Activated CD4-positive, alpha-beta memory T cell treated with anti-CD3 and anti-CD28 coated beads for 36 hours (primary cell): ENCODE measurements at regions of chr4 and their contacts with region 1.

Region 1: GRCh38 chr4:26330186-26330787 is 9.5 kb downstream of the RBPJ start:
- DNase-seq: no peak
- H3K4me3 Mint-ChIP-seq: no peak overlapping the region
- H3K27ac Mint-ChIP-seq: no peak overlapping the region
- H3K4me1 Mint-ChIP-seq: peaks cover 53% of the 10 kb centered on the region
- H3K27me3 Mint-ChIP-seq: no peaks in the 10 kb centered on the region

Region 2: GRCh38 chr4:25749150-25749794 is 581.0 kb before region 1 on chr4:
- CTCF ChIA-PET with region 1: no interaction called
- POLR2A ChIA-PET with region 1: no interaction called
- intact Hi-C with region 1: no loop called
- DNase-seq: no peak
- H3K4me3 Mint-ChIP-seq: no peak overlapping the region
- H3K27ac Mint-ChIP-seq: no peak overlapping the region
- H3K4me1 Mint-ChIP-seq: no peaks in the 10 kb centered on the region
- H3K27me3 Mint-ChIP-seq: no peaks in the 10 kb centered on the region

Region 3: GRCh38 chr4:26061248-26061986 is 268.9 kb before region 1 on chr4:
- CTCF ChIA-PET with region 1: interaction called, 11 read pairs
- POLR2A ChIA-PET with region 1: no interaction called
- intact Hi-C with region 1: no loop called
- DNase-seq: peak; percentile 43
- H3K4me3 Mint-ChIP-seq: no peak overlapping the region
- H3K27ac Mint-ChIP-seq: no peak overlapping the region
- H3K4me1 Mint-ChIP-seq: peaks cover 26% of the 10 kb centered on the region
- H3K27me3 Mint-ChIP-seq: no peaks in the 10 kb centered on the region

Region 4: GRCh38 chr4:26342328-26343037 is 12.2 kb after region 1 on chr4:
- CTCF ChIA-PET with region 1: interaction called, 34 read pairs
- POLR2A ChIA-PET with region 1: no interaction called
- intact Hi-C with region 1: no loop called
- DNase-seq: no peak
- H3K4me3 Mint-ChIP-seq: no peak overlapping the region
- H3K27ac Mint-ChIP-seq: no peak overlapping the region
- H3K4me1 Mint-ChIP-seq: peaks cover 59% of the 10 kb centered on the region
- H3K27me3 Mint-ChIP-seq: no peaks in the 10 kb centered on the region

Region 5: DNA sequence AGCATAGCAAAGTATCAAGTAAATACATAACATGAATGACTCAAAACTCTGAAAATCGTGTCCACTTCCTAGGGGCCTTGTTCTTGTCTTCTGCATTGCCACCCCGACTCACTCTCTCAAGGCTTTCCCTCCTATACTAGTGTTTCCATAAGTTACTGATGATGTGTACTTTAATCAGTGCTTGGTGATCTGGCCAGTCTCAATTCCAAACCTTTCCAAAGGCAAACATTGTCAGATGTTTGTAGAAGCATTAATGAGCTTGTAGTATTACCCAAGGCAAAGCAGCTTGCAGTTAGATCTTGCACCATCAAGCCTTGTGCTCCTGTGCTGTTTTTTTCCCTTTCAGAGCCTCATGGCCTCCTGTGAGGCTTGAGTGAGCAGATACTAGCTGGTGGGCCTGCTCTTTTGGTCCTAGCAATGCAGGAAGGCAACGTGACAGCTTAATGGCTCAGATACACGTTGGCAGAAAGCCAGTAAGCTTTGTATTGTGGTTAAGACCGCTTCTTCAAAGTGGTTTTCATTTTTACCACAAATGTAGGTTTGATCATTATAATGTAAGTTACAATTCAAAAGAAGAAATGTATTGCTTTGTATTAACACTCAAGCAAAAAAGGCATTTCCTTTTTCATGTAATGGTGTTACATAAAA is 42.4 kb after region 1 on chr4:
- CTCF ChIA-PET with region 1: interaction called, 10 read pairs
- POLR2A ChIA-PET with region 1: interaction called, 3 read pairs
- intact Hi-C with region 1: loop called (anchors 5 kb)
- DNase-seq: peak; percentile 45
- H3K4me3 Mint-ChIP-seq: no peak overlapping the region
- H3K27ac Mint-ChIP-seq: peak overlapping the region; percentile 2
- H3K4me1 Mint-ChIP-seq: peaks cover 62% of the 10 kb centered on the region
- H3K27me3 Mint-ChIP-seq: no peaks in the 10 kb centered on the region

Region 6: GRCh38 chr4:26410385-26411293 is 80.4 kb after region 1 on chr4:
- CTCF ChIA-PET with region 1: interaction called, 136 read pairs
- POLR2A ChIA-PET with region 1: interaction called, 4 read pairs
- intact Hi-C with region 1: loop called (anchors 1 kb)
- DNase-seq: no peak
- H3K4me3 Mint-ChIP-seq: no peak overlapping the region
- H3K27ac Mint-ChIP-seq: no peak overlapping the region
- H3K4me1 Mint-ChIP-seq: peaks cover 2% of the 10 kb centered on the region
- H3K27me3 Mint-ChIP-seq: no peaks in the 10 kb centered on the region

Region 7: DNA sequence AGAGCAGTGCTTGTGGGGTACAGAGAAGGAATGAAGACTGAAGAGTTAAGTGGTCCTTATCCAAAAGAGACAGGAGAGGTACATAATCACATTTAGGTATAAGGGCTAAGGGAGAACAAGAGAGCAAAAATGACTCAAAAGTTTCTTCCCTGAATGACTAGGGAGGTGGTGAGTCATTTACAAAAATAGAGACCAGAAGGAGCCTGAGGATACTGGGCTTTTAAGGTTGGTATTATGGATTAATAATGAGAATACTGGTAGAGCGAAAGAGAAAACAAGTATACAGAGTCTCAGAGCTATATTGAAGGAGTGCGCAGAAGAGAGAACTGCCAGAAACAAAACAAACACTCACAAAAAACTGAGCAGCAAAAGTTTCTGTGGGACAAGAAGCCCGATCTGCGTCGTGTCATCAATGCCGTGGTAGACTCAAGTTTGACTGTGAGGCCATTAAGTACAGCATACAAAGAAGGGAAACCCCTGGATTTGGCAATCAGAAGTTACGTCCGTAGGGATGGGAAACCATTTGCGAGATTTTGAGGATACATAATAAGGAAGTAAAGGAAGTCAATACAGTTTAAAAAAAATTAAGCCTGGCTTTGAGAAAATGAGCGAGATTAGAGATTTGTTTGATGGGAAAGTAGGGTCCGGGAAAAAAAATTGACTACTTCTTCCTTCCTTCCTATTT is 401.2 kb after region 1 on chr4:
- CTCF ChIA-PET with region 1: no interaction called
- POLR2A ChIA-PET with region 1: no interaction called
- intact Hi-C with region 1: no loop called
- DNase-seq: peak; percentile 11
- H3K4me3 Mint-ChIP-seq: no peak overlapping the region
- H3K27ac Mint-ChIP-seq: no peak overlapping the region
- H3K4me1 Mint-ChIP-seq: peaks cover 11% of the 10 kb centered on the region
- H3K27me3 Mint-ChIP-seq: no peaks in the 10 kb centered on the region